CD8-positive, alpha-beta T cell (primary cell): ENCODE measurements at regions of chr19 and their contacts with region 1.

Region 1: DNA sequence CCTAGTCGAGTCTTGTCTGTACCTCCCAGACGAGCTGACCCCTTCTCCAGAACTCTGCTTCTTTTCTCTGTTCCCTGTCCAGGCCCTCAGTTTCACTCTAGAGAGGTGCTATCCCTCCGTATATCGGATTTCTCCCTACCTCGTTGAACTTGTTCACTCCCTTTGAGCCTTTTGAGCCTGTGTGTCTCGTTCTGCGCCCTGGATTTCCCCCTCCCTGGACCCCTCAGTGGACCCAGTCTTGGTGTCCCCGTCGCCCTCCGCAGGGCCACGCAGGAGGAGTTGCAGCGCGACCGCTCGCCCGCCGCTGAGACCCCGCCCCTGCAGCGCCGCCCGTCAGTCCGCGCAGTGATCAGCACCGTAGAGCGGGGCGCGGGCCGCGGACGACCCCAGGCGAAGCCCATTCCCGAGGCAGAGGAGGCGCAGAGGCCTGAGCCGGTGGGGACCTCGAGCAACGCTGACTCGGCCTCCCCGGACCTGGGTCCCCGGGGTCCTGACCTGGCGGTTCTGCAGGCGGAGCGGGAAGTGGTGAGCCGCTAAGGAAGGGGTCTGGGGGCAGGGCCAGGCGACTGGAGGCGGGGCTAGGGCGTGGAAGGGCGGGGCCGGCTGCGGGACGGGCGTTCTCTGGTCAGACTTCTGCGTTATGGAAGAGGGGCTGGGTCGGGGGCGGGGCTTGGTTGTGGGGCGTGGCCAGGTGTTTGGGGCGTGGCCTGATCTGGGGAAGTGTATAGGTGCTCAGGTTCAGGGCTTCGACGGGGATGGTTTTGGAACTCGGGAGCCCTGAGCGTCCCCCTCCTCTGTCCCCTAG is 5.5 kb downstream of the EPS8L1 start:
- DNase-seq: peak; percentile 82 to 92 (median 89)
- ATAC-seq: peak; percentile 76
- H3K4me3 ChIP-seq: peak overlapping the region; percentile 58 to 83
- H3K4me3 Mint-ChIP-seq: peak overlapping the region; percentile 84
- H3K27ac ChIP-seq: peak overlapping the region in 1 of 2 experiments; percentile 38
- H3K27ac Mint-ChIP-seq: no peak overlapping the region
- H3K4me1 ChIP-seq: peaks cover 30% of the 10 kb centered on the region
- H3K4me1 Mint-ChIP-seq: peaks cover 22% of the 10 kb centered on the region
- H3K27me3 ChIP-seq: peaks cover 18 to 23% of the 10 kb centered on the region in 2 experiments
- H3K27me3 Mint-ChIP-seq: peaks cover 61% of the 10 kb centered on the region
- CTCF ChIP-seq: no peak

Region 2: DNA sequence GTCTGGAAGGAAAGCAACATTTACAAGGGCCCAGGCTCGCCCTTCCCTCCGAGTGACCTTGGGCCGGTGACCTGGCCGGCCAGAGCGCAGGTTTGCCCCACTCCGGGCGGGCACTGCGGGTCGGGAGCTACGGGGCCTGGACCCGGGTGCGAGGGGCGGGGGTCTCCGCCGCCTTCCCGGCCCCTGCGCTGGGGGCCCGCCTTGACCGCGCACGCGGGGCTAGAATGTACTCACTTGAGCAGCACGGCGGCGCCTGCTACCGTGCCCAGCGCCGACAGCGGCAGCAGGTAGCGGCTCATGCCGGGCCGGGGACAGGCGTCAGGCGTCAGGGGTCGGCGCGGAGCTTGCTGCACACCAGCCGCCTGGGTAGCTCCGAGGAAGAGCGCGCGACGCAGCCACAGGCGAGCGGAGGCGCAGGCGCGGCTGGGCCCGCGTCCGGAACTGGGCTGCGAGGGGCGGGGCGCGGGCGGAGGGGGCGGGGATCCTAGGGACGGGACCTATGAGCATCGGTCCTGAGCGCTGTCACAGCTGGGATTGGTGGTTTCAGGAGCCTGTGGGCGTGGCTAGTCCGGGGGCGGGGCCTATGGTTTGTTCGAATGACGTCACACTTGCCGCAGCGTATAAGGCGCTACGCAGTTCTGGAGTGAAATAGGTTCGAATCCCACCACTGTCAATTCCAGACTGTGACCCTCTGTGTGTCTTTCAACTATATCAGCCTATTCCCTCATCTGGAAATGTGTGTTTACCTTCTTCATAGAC is 18.3 kb before region 1 on chr19 and contains the start of gene RDH13:
- CTCF ChIA-PET with region 1: interaction called, 3 read pairs
- POLR2A ChIA-PET with region 1: no interaction called
- intact Hi-C with region 1: loop called (anchors 1 kb)
- DNase-seq: peak; percentile 96 to 99 (median 97)
- ATAC-seq: peak; percentile 99
- H3K4me3 ChIP-seq: peak within 1 kb of the TSS; percentile 60 to 87
- H3K4me3 Mint-ChIP-seq: peak within 1 kb of the TSS; percentile 85
- H3K27ac ChIP-seq: peak within 1 kb of the TSS; percentile 62 to 67
- H3K27ac Mint-ChIP-seq: peak within 1 kb of the TSS; percentile 69
- H3K4me1 ChIP-seq: peaks cover 8% of the 10 kb centered on the region
- H3K4me1 Mint-ChIP-seq: peaks cover 25% of the 10 kb centered on the region
- H3K27me3 ChIP-seq: peaks cover 3 to 10% of the 10 kb centered on the region in 2 experiments
- H3K27me3 Mint-ChIP-seq: peaks cover 14% of the 10 kb centered on the region
- CTCF ChIP-seq: no peak
- total RNA-seq, gene RDH13: 12.4 to 13.4 TPM

Region 3: GRCh38 chr19:55160128-55160985 is 79.2 kb after region 1 on chr19:
- CTCF ChIA-PET with region 1: no interaction called
- POLR2A ChIA-PET with region 1: no interaction called
- intact Hi-C with region 1: loop called in 1 of 2 experiments (anchors 2 kb)
- DNase-seq: peak; percentile 69 to 91 (median 83)
- ATAC-seq: peak; percentile 96
- H3K4me3 ChIP-seq: no peak overlapping the region
- H3K4me3 Mint-ChIP-seq: no peak overlapping the region
- H3K27ac ChIP-seq: no peak overlapping the region
- H3K27ac Mint-ChIP-seq: no peak overlapping the region
- H3K4me1 ChIP-seq: peaks cover 14% of the 10 kb centered on the region
- H3K4me1 Mint-ChIP-seq: peaks cover 9% of the 10 kb centered on the region
- H3K27me3 ChIP-seq: peaks cover 15 to 29% of the 10 kb centered on the region in 2 experiments
- H3K27me3 Mint-ChIP-seq: peaks cover 58% of the 10 kb centered on the region
- CTCF ChIP-seq: peak; percentile 96

Region 4: GRCh38 chr19:55580628-55581144 is 499.5 kb after region 1 on chr19 and contains the start of gene ZNF579:
- CTCF ChIA-PET with region 1: no interaction called
- POLR2A ChIA-PET with region 1: no interaction called
- intact Hi-C with region 1: no loop called
- DNase-seq: peak; percentile 39 to 86 (median 75)
- ATAC-seq: peak; percentile 71
- H3K4me3 ChIP-seq: peak within 1 kb of the TSS; percentile 70 to 90
- H3K4me3 Mint-ChIP-seq: peak within 1 kb of the TSS; percentile 91
- H3K27ac ChIP-seq: peak within 1 kb of the TSS; percentile 67 to 81
- H3K27ac Mint-ChIP-seq: peak within 1 kb of the TSS; percentile 93
- H3K4me1 ChIP-seq: peaks cover 20% of the 10 kb centered on the region
- H3K4me1 Mint-ChIP-seq: peaks cover 27% of the 10 kb centered on the region
- H3K27me3 ChIP-seq: no peaks in the 10 kb centered on the region
- H3K27me3 Mint-ChIP-seq: no peaks in the 10 kb centered on the region
- CTCF ChIP-seq: no peak
- total RNA-seq, gene ZNF579: 5.7 to 6.1 TPM